Breast epithelium (tissue), 4 donors: ENCODE measurements at regions of chr1 and their contacts with region 1.

Region 1: GRCh38 chr1:114713022-114713421 is 3.5 kb downstream of the NRAS start:
- DNase-seq: no peak
- H3K4me3 ChIP-seq: no peak overlapping the region
- H3K27ac ChIP-seq: no peak overlapping the region
- H3K4me1 ChIP-seq: no peaks in the 10 kb centered on the region
- H3K27me3 ChIP-seq: no peaks in the 10 kb centered on the region
- CTCF ChIP-seq: no peak
- POLR2A ChIP-seq: no peak

Region 2: GRCh38 chr1:115006191-115006590 is 293.2 kb after region 1 on chr1:
- intact Hi-C with region 1: loop called (anchors 5 kb)
- DNase-seq: no peak
- H3K4me3 ChIP-seq: no peak overlapping the region
- H3K27ac ChIP-seq: no peak overlapping the region
- H3K4me1 ChIP-seq: no peaks in the 10 kb centered on the region
- H3K27me3 ChIP-seq: no peaks in the 10 kb centered on the region
- CTCF ChIP-seq: no peak
- POLR2A ChIP-seq: no peak

Region 3: DNA sequence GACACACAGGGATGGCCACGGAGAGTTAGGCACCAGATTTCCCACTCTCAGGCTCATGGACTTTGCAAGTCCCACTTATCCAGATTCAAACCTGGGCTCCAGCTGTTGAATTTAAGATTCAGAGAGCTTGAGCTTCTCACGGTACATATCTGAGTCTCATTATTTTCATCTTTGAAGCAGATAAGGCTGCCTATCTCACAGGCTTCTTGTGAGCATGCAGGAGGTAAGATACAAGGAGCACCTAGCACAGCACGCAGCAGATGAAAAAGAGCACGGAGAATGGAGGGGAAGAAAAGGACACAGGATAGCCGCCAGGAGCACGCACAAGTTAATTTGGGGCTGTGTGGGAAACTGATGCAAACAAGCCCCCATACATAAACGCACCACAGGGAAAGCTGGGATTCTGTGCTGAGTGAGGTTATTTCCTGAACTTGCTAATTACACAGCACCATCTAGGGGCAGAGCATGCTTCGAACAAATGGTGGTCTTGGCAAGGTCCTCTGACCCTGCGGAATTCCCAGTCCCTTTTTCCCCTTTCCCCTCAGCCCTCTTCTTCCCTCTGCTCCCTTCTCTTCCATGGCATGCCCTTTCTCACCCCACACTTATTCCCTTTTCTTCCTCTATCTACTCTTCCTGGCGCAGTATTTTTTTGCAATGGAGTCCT is 794.0 kb after region 1 on chr1:
- intact Hi-C with region 1: no loop called
- DNase-seq: no peak
- H3K4me3 ChIP-seq: no peak overlapping the region
- H3K27ac ChIP-seq: no peak overlapping the region
- H3K4me1 ChIP-seq: no peaks in the 10 kb centered on the region
- H3K27me3 ChIP-seq: no peaks in the 10 kb centered on the region
- CTCF ChIP-seq: no peak
- POLR2A ChIP-seq: no peak